GM12878 (cell line): ENCODE measurements at regions of chr1 and their contacts with region 1.

Region 1: DNA sequence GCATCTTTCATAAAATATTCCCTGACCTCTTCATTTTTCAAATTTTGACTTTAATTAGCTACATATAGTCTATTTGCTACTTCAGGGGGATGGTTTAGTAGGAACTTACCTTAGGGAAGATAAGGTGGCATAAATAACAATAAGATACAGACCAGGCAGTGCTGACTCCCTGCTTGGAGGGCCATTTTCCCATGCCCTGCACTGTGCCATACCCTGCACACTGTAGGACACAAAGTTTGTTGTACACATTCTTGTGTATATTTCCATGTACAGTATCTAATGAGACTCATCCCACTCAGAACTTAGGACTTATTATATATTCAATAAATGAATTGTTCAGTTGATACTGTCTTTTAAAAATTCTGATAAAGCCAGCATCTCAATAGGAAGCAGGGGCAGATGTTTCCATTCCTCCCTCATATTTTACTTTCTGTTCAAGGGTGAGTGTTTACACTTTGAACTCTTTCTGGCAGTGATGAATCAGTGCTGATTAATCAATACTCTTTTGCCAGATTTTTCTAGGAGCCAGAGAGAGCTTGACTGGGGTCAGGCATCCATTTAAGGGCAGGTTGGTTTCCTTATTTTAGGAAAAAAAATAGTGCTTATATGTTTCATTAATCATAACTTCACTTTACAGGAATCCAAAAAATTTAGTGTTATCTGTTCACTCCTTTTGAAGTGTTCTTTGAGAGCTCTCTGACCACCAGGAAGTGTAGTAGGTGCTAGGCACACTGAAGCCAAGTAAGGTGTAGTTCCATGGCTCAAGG is 30.6 kb downstream of the MPZL1 start:
- DNase-seq: no peak
- ATAC-seq: peak; percentile 54
- H3K4me3 ChIP-seq: peak overlapping the region; percentile 46
- H3K27ac ChIP-seq: peak overlapping the region; percentile 88
- H3K4me1 ChIP-seq: peaks cover 11% of the 10 kb centered on the region
- H3K27me3 ChIP-seq: no peaks in the 10 kb centered on the region
- CTCF ChIP-seq: no peak
- EP300 ChIP-seq: no peak
- POLR2A ChIP-seq: no peak
- RAD21 ChIP-seq: no peak

Region 2: DNA sequence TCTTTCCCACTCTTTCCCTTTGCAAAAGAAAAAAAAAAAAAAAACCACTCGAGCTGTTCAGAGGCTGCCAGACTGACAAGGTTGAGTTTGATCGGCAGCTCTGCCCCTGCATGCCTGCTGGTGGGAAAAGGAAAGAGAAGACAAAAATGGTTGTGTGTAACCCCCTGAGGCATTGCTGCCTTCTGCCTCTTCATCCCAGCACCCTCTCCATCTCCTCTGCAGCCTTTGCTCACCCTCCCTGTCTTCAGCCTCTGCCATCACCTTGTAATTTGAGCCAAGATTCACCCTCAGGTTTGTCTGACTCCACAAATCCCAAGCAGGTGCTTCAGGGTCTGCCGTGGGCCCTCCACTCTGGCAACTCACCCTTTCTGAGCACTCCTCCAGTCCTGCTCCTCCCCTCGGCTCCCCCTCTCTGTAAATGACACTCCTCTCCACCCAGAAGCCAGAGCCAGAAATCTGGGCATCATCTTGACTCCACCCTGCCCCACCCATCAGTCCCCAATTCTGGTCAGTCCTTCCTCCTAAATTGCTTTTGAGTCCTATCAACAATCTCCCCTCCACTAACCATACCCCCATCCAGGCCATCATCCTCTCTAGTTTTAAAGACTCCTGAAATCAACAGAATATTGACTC is 82.0 kb before region 1 on chr1:
- CTCF ChIA-PET with region 1: no interaction called
- POLR2A ChIA-PET with region 1: no interaction called
- RAD21 ChIA-PET with region 1: no interaction called
- SMC1A ChIA-PET with region 1: no interaction called
- in situ Hi-C with region 1: no loop called
- intact Hi-C with region 1: no loop called
- DNase-seq: no peak
- ATAC-seq: no peak
- H3K4me3 ChIP-seq: no peak overlapping the region
- H3K27ac ChIP-seq: peak overlapping the region; percentile 13; the same call in 1 of the 2 replicates
- H3K4me1 ChIP-seq: peaks cover 83% of the 10 kb centered on the region
- H3K27me3 ChIP-seq: no peaks in the 10 kb centered on the region
- CTCF ChIP-seq: no peak
- EP300 ChIP-seq: no peak
- POLR2A ChIP-seq: no peak
- RAD21 ChIP-seq: no peak

Region 3: GRCh38 chr1:167721617-167722151 is 30.7 kb before region 1 on chr1 and contains the start of gene MPZL1:
- CTCF ChIA-PET with region 1: interaction called, 28 read pairs
- POLR2A ChIA-PET with region 1: interaction called, 11 read pairs
- RAD21 ChIA-PET with region 1: interaction called, 23 read pairs
- SMC1A ChIA-PET with region 1: interaction called, 34 read pairs
- in situ Hi-C with region 1: no loop called
- intact Hi-C with region 1: no loop called
- DNase-seq: peak; percentile 77
- ATAC-seq: peak; percentile 92
- H3K4me3 ChIP-seq: peak within 1 kb of the TSS; percentile 89
- H3K27ac ChIP-seq: peak within 1 kb of the TSS; percentile 80
- H3K4me1 ChIP-seq: peaks cover 36% of the 10 kb centered on the region
- H3K27me3 ChIP-seq: no peaks in the 10 kb centered on the region
- CTCF ChIP-seq: no peak
- EP300 ChIP-seq: no peak
- POLR2A ChIP-seq: peak; percentile 82
- RAD21 ChIP-seq: no peak
- polyA plus RNA-seq, gene MPZL1: 9.8 to 12.0 TPM

Region 4: DNA sequence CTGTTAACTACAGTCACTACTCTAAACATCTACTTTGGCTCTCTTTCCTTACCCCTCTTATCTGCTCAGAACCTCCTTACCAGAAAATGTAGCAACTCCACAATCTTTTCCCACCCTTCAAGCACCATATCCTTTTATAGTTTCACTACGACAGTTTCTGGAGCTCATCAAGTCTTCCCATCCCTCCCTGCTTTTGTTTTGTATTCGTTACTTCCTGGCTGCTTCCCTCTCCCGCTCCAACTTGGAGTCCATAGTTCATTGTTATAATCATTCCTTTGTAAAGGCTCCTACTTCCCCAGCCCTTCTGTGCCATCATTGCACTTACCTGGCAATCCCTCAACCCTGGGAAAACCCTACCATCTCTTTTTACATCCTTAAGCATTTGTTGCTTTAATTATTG is 12.7 kb before region 1 on chr1:
- CTCF ChIA-PET with region 1: interaction called, 10 read pairs
- POLR2A ChIA-PET with region 1: no interaction called
- RAD21 ChIA-PET with region 1: no interaction called
- SMC1A ChIA-PET with region 1: interaction called, 17 read pairs
- in situ Hi-C with region 1: no loop called
- intact Hi-C with region 1: no loop called
- DNase-seq: no peak
- ATAC-seq: no peak
- H3K4me3 ChIP-seq: no peak overlapping the region
- H3K27ac ChIP-seq: no peak overlapping the region
- H3K4me1 ChIP-seq: no peaks in the 10 kb centered on the region
- H3K27me3 ChIP-seq: no peaks in the 10 kb centered on the region
- CTCF ChIP-seq: no peak
- EP300 ChIP-seq: no peak
- POLR2A ChIP-seq: no peak
- RAD21 ChIP-seq: no peak